ENCODE measurements at regions of chr2 and their contacts with region 1.

Region 1: DNA sequence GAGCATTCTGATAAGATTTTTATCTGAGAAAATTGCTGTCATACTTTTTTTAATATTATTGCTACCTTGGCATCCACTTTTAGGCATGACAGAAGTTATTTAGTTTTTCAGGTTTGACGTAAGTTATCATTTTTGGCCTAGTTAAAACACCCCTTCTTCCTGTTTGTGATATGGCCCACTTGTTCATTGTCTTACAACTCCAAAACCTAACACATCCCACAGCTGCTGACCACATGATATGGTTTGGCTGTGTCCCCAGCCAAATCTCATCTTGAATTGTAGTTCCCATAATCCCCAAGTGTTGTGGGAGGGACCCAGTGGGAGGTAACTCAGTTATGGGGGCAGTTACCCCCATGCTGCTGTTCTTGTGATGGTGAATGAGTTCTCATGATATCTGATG is 388.1 kb downstream of the SLC4A3 start:
- DNase-seq: no peak
- CTCF ChIP-seq: no peak

Region 2: DNA sequence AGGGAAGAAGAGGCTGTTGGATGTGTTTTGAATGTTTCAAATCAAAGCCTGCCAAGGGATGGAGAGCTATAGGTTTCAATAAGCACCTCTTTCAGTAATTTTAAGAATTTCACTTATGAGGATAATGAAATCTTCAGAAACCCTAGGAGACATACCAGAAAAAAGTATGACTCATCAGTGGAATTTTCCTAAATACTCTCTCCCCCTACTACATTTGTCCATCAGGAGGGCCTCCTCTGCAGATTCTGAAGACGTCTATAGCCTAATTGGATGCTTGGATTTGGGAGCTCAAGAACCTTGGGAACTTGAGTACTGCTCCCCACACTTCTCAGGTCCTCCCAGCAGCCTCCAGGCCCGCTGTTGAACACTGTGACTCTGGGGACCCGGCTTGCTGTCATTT is 13.8 kb before region 1 on chr2:
- CTCF ChIA-PET with region 1: interaction called, 17 read pairs
- POLR2A ChIA-PET with region 1: no interaction called
- DNase-seq: no peak
- CTCF ChIP-seq: no peak

Measured in GM10248 (cell line).